ENCODE measurements at regions of chr1 and their contacts with region 1.

Region 1: GRCh38 chr1:175154629-175155472 is 37.7 kb downstream of the KIAA0040 start:
- DNase-seq: peak; percentile 67
- ATAC-seq: peak; percentile 35 to 56

Region 2: GRCh38 chr1:175089136-175089718 is 65.6 kb before region 1 on chr1:
- intact Hi-C with region 1: no loop called
- DNase-seq: no peak
- ATAC-seq: peak in 1 of 2 donors; percentile 38

Region 3: DNA sequence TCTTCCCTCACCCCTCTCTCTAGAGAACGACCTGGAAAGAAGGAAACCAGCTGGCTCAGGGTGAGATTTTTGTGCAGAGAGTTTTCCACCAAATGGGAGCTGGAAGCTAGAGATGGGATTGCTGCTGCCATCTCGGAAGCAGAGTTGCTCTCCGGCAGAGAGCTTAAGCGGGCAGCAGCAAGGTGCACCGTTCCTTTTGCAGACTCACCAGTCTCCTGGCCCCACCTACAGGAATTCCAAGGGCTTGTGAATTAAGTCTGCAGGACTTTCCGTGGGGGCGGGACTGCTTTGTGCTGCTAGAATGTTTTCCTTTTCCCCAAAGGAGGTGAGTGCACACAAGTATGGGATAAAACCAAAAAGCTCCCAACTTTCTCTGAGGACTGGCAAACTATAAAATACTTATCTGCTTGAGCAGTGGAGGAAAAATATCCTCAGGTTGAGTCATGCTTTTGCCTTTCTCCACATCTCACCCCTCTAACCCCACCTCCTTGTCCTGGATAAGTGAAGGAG is 66.9 kb after region 1 on chr1:
- intact Hi-C with region 1: loop called in 1 of 2 experiments (anchors 2 kb)
- DNase-seq: peak; percentile 36
- ATAC-seq: peak; percentile 56 to 85

Region 4: DNA sequence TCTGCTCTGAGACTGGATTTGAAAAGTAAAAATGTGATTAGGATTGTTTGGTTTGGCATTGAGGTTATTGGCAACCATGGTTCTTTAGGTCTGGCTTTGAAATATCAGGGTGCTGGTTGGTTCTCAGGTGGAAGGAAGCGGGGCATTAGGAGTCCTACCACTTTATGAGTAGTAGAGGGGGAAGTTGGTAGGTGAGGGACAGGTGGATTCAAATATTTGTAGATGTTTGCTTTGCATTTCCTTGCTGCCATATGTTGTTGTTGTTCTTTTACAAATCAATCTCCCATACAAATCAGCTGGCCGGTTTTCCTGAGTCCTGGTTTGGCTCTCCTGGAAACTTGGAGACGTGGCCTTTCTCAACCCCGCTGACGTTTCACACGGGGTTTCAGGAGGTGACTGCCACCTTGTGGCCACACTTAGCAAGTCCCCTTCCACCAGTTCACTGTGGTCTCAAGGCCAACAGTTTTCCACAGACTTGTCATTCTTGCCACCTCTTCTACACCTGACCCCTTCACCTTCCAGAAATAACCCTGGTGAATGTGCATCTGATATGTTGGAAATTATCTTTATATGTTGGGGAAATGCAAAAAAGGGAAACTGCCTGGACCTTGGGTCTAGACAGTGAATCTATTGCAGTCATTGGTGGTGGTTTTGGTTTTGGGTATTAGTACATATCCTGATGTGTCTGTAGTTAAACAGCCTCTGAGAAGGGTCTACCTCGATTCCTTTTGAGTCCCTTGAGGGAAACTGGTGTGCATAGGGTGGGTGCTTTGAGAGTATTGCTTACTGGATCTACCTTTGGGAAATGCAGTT is 164.8 kb after region 1 on chr1:
- intact Hi-C with region 1: loop called (anchors 1 to 2 kb)
- DNase-seq: peak; percentile 84
- ATAC-seq: peak; percentile 84 to 88

Region 5: GRCh38 chr1:175887981-175888433 is 733.2 kb after region 1 on chr1:
- intact Hi-C with region 1: loop called in 1 of 2 experiments (anchors 5 kb)
- DNase-seq: peak; percentile 65
- ATAC-seq: peak; percentile 90 to 91

Region 6: DNA sequence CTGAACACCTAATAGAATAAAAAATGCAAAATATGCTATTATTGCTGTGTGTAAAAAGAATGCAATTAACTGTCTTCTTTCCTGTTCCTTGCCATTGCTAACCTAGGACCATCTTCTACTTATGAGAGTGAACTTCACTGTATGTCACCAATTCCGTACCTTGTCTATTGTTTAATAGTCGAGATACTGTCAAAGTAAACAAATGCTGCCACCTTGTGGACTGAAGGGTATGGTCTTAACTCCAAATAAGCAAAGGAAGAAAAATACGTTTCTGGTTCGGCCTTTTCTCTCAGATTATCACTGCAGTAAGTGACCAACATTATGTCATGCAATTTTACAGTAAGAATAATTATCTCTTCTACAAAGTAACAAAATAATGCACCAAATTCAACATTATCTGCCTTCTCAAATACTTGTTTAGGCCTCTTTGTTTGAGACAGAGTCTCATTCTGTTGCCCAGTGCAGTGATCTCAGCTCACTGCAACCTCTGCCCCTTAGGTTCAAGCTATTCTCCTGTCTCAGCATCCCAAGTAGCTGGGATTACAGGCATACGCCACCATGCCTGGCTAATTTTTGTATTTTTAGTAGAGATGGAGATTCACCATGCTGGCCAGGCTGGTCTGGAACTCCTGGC is 918.8 kb after region 1 on chr1:
- intact Hi-C with region 1: loop called in 1 of 2 experiments (anchors 10 kb)
- DNase-seq: no peak
- ATAC-seq: peak; percentile 59 to 65